Activated CD8-positive, alpha-beta T cell treated with anti-CD3 and anti-CD28 coated beads for 36 hours (primary cell): ENCODE measurements at regions of chr10 and their contacts with region 1.

Region 1: GRCh38 chr10:79322616-79323543 is 24.4 kb upstream of the PPIF start:
- DNase-seq: peak; percentile 93
- ATAC-seq: peak; percentile 75
- H3K4me3 Mint-ChIP-seq: peak overlapping the region; percentile 38
- H3K27ac Mint-ChIP-seq: peak overlapping the region; percentile 94
- H3K4me1 Mint-ChIP-seq: peaks cover 66% of the 10 kb centered on the region
- H3K27me3 Mint-ChIP-seq: no peaks in the 10 kb centered on the region
- CTCF ChIP-seq: no peak

Region 2: DNA sequence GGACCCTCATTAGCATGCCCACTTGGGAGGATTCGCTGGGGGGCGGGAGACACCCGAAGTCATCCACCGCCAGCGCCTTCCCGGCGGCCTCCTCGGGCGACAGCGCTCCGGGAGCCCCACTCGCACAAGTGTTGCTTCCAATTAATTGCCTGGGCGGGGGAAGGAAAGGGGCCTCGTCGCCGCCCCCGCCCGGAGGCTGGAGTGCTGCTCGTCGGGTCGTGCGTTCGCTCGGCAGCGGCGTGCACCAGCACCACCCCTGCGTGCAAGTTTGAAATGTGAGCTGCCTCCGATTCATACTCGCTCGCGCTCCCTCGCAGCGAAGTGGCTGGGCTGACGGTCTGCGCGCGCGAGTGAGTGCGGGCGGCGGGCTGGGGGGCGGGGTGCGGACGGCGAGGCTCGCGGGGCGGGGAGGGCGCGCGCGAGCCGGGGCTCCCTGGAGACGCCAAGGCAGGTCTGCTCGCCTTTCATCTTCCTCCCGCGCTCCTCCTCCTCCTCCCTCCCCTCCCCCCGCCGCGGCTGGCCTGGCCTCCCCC is 80.2 kb before region 1 on chr10:
- CTCF ChIA-PET with region 1: no interaction called
- POLR2A ChIA-PET with region 1: interaction called, 4 read pairs
- intact Hi-C with region 1: loop called (anchors 10 kb)
- DNase-seq: peak; percentile 82
- ATAC-seq: peak; percentile 49
- H3K4me3 Mint-ChIP-seq: peak overlapping the region; percentile 78
- H3K27ac Mint-ChIP-seq: peak overlapping the region; percentile 88
- H3K4me1 Mint-ChIP-seq: peaks cover 59% of the 10 kb centered on the region
- H3K27me3 Mint-ChIP-seq: no peaks in the 10 kb centered on the region
- CTCF ChIP-seq: no peak